Ascending aorta (tissue), 2 donors: ENCODE measurements at regions of chr17 and their contacts with region 1.

Region 1: DNA sequence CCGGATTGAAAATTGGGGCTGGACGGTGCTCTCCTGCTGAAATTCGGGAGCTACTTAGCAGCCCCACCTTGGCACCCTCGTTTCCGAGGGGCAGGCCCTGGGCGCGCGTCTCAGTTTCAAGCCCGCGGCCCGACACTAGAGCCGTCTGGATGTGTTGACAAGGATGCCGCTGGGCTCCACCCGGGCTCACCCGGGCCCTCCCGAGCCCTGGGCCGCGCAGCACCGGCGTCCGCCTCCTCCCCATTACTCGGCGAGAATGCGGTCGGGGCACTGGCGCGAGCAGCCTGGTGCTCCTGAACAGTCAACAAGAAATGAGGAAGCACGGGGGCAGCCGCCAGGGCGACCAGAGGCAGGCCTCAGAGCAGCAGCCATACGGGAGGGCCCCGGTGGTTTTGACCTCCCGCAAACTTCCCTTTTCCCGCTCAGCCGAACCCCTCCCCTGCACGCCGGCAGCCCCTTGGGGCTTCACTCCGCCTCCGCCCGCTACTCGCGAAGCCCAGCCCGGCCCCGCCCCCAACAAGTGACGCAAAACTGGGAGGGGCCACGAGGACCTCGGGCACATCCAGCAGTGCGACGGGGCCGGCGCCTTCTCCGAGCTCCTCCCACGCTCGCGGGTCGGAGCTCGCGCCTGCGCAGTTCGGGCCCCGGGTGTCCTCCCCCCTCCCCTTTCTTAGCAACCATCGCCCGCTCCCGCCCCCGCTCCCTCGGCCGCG is 447 bp upstream of the SEC14L1 start:
- DNase-seq: peak; percentile 95 to 100
- H3K4me3 ChIP-seq: peak overlapping the region; percentile 92 to 93
- H3K27ac ChIP-seq: peak overlapping the region; percentile 93
- H3K4me1 ChIP-seq: peaks cover 0 to 8% of the 10 kb centered on the region in 2 donors
- H3K27me3 ChIP-seq: no peaks in the 10 kb centered on the region
- CTCF ChIP-seq: no peak

Region 2: GRCh38 chr17:76924345-76925342 is 215.7 kb before region 1 on chr17:
- intact Hi-C with region 1: no loop called
- DNase-seq: no peak
- H3K4me3 ChIP-seq: no peak overlapping the region
- H3K27ac ChIP-seq: no peak overlapping the region
- H3K4me1 ChIP-seq: peaks cover 0 to 2% of the 10 kb centered on the region in 2 donors
- H3K27me3 ChIP-seq: no peaks in the 10 kb centered on the region
- CTCF ChIP-seq: no peak

Region 3: DNA sequence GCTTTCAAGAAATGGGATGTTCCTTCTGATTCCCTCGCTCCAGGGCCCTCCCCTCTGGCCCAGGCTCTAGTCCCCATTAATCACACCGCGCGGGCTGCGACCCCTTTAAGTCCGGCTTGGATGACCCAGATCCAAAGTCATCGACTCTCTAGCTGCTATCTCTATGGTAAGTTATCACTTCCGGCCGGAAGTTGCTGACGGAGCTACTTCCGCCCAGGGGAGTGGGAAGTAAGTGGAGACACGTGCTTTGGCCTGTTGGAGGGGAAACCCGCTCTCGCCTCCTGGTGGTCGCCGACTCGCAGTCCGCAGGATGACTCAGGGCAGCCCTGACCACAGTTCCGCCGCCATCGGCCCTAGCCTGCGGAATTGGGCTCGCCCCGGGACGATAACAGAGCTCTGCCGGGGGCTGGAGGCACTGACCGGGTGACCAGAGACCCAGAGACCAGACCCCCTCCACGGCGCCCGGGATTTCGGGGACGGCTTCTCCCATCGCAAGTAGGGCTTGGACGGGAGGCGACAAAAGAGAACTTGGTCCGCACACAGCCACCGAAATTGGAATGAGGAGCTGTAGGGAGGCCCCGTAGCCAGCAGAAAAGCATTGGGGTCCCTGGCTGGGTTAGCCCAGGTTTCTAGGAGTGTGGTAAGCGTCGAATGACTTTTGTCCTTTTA is 51.7 kb before region 1 on chr17:
- intact Hi-C with region 1: loop called (anchors 2 kb)
- DNase-seq: peak; percentile 81 to 98
- H3K4me3 ChIP-seq: peak overlapping the region; percentile 79 to 90
- H3K27ac ChIP-seq: peak overlapping the region; percentile 89 to 92
- H3K4me1 ChIP-seq: peaks cover 0 to 16% of the 10 kb centered on the region in 2 donors
- H3K27me3 ChIP-seq: no peaks in the 10 kb centered on the region
- CTCF ChIP-seq: peak; percentile 78 to 91 (median 81)

Region 4: DNA sequence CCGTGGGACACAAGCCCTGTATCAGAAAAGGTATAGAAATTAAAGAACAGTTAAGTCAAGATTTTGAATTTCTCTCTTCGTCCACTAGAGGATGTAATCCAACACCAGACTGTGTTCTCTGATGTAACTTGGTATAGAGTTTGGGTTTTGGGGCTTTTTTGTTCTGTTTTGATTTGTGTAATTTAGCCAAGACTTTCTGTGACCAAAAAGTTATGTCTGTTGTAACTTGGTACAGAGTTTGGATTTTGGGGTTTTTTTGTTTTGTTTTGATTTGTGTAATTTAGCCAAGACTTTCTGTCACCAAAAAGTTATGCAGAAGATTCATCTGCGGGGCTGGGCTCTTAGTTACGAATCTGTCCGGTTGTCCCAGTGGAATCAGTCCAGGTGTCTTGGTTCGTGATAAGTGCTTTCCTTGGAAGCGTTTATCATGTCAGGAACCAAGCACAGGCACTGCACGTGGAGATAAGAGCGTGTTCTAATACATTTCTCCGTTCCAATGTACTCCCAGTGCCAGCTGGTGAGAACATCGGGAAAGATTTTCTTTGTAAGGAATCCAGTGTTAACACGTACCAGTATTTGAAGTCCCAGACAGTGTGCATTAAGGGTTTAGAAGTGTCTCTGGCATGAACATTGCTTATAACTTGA is 43.6 kb before region 1 on chr17:
- intact Hi-C with region 1: loop called (anchors 2 kb)
- DNase-seq: no peak
- H3K4me3 ChIP-seq: peak overlapping the region in 1 of 2 donors; percentile 39
- H3K27ac ChIP-seq: peak overlapping the region; percentile 65 to 72
- H3K4me1 ChIP-seq: peaks cover 14 to 17% of the 10 kb centered on the region in 2 donors
- H3K27me3 ChIP-seq: no peaks in the 10 kb centered on the region
- CTCF ChIP-seq: peak; percentile 68 to 78 (median 78)

Region 5: GRCh38 chr17:77153472-77153871 is 13.2 kb after region 1 on chr17:
- intact Hi-C with region 1: no loop called
- DNase-seq: no peak
- H3K4me3 ChIP-seq: no peak overlapping the region
- H3K27ac ChIP-seq: peak overlapping the region; percentile 31 to 55
- H3K4me1 ChIP-seq: peaks cover 0 to 18% of the 10 kb centered on the region in 2 donors
- H3K27me3 ChIP-seq: no peaks in the 10 kb centered on the region
- CTCF ChIP-seq: no peak

Region 6: DNA sequence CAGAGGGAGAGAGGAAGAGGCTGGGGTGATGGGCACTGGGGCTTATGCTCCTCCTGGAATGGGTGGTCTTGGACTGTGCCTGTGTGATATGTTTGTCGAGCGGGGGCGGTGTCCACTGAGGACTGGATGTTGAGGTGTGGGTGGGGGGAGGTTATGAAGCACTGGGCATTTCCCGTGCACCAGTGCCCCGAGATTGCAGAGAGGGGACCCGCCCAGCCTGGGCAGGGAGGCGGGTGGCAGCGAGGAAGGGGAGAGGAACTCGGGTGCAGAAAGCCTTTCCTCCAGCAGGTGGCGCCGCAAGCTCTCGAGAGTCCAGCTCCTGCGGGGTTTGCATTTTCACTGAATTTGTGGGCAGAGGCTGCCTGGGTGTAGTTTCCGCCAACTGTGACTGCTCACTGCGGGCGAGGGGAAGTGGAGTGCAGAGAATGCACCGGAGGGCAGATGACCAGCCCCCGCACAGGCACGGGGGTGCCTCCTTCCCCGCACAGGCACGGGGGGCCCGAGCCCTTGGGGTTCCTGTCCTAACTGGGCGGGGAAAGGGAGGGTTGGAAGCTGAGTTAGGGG is 191.1 kb after region 1 on chr17:
- intact Hi-C with region 1: no loop called
- DNase-seq: peak; percentile 74 to 97
- H3K4me3 ChIP-seq: peak overlapping the region in 1 of 2 donors; percentile 25
- H3K27ac ChIP-seq: no peak overlapping the region
- H3K4me1 ChIP-seq: peaks cover 0 to 6% of the 10 kb centered on the region in 2 donors
- H3K27me3 ChIP-seq: no peaks in the 10 kb centered on the region
- CTCF ChIP-seq: peak; percentile 92 to 99 (median 94)

Region 7: GRCh38 chr17:78176548-78177025 is 1036.3 kb after region 1 on chr17:
- intact Hi-C with region 1: loop called (anchors 10 kb)
- DNase-seq: peak in 1 of 2 donors; percentile 84
- H3K4me3 ChIP-seq: no peak overlapping the region
- H3K27ac ChIP-seq: peak overlapping the region; percentile 81 to 89
- H3K4me1 ChIP-seq: peaks cover 10 to 73% of the 10 kb centered on the region in 2 donors
- H3K27me3 ChIP-seq: no peaks in the 10 kb centered on the region
- CTCF ChIP-seq: peak; percentile 64 to 81 (median 78)